Panc1 (cell line): ENCODE measurements at regions of chr16 and their contacts with region 1.

Region 1: DNA sequence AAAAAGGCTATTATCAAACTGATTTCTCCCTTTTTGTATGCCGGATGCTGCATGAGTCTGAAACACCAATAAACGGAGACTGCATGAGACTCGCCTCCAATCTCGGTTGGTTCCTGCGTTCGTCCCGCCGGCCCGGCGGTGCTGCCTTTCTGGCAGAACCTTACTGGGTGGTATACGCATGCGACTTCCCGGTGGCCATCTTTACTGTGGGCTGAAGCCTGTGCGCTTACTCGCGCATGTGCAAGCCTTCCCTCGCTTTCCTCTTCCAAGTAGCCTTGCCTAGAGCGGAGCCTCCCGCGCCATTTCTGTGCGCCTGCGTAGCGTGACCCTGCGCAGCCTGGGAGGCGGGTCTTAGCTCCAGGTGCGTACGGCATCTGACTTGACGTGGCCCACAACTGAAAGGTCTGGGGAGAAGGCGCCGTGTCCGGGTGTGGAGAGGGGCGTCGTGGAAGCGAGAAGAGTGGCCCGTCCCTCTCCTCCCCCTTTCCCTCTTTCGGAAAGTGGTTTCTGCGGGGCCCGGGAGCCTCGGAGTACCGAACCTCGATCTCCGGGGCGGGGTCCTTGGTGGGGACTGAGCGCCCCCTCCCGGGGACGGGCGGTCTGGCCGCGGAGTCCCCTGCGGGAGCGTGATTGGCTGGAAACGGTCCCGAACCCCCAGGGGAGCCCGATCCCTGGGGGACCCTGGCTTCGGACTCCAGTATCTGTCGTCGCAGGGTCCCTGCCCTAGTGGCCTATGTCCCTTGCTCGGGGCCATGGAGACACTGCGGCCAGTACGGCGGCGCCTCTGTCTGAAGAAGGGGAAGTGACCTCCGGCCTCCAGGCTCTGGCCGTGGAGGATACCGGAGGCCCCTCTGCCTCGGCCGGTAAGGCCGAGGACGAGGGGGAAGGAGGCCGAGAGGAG is at the start of gene PAGR1:
- DNase-seq: peak; percentile 98
- ATAC-seq: peak; percentile 75
- H3K4me3 ChIP-seq: peak within 1 kb of the TSS; percentile 86 to 92
- H3K27ac ChIP-seq: peak within 1 kb of the TSS; percentile 97
- H3K4me1 ChIP-seq: peaks cover 59% of the 10 kb centered on the region
- H3K27me3 ChIP-seq: no peaks in the 10 kb centered on the region
- CTCF ChIP-seq: peak; percentile 97
- total RNA-seq, gene PAGR1: 42.5 TPM

Region 2: DNA sequence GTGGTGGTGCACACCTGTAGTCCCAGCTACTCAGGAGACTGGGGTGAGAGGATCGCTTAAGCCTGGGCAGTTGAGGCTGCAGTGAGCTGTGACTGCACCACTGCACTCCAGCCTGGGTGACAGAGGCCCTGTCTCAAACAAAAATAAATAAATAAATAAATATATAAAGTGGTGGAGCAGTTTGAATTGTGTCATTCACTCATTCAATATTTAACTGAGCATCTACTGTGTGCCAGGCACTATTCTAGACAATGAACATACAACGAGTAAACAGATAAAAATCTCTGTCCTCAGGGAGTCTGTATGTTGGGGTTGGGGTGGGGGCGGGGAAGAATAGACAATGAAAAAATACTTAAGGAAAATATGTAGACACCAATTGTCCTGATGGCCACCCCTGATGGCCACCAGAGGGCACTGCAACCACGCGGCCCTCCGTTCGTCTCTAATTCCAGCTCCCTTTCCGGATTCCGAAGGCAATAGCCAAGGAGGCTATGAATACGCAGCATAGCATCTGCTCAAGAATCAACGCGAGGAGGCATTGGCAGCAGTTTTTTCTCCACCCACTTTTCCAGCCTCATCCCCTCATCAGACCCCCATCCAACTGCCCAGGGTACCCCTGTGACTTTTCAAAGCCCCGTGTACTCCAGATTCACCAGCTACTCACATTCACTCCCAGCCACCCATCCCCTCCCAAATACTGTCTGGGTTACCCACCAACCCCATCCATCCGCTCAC is 115.6 kb before region 1 on chr16:
- CTCF ChIA-PET with region 1: interaction called, 20 read pairs
- POLR2A ChIA-PET with region 1: interaction called, 17 read pairs
- in situ Hi-C with region 1: no loop called
- intact Hi-C with region 1: loop called (anchors 10 kb)
- DNase-seq: peak; percentile 75
- ATAC-seq: peak; percentile 96
- H3K4me3 ChIP-seq: no peak overlapping the region
- H3K27ac ChIP-seq: no peak overlapping the region
- H3K4me1 ChIP-seq: no peaks in the 10 kb centered on the region
- H3K27me3 ChIP-seq: no peaks in the 10 kb centered on the region
- CTCF ChIP-seq: peak; percentile 97

Region 3: GRCh38 chr16:29848420-29849297 is 32.6 kb after region 1 on chr16:
- CTCF ChIA-PET with region 1: interaction called, 10 read pairs
- POLR2A ChIA-PET with region 1: no interaction called
- in situ Hi-C with region 1: no loop called
- intact Hi-C with region 1: no loop called
- DNase-seq: peak; percentile 51
- ATAC-seq: peak; percentile 91
- H3K4me3 ChIP-seq: no peak overlapping the region
- H3K27ac ChIP-seq: no peak overlapping the region
- H3K4me1 ChIP-seq: no peaks in the 10 kb centered on the region
- H3K27me3 ChIP-seq: no peaks in the 10 kb centered on the region
- CTCF ChIP-seq: peak; percentile 92

Region 4: DNA sequence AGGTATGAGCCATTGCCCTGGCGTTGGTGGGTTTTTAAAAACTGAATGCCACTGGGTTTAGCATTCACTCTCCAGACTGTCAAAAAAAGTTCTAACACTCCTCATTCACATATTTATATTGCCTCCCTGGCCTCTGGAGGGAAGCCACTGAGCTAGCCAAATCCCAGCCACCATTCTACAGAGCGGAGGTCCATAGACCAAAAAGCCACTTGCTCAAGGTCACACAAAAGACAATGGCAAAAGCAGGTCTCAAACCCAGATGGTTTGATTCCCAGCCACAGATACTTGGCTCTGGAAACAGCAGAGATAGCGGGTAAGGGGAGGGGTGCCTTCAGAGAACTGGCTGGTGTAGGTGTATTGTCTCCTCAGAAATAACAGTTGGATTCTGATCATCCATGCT is 65.0 kb after region 1 on chr16:
- CTCF ChIA-PET with region 1: no interaction called
- POLR2A ChIA-PET with region 1: no interaction called
- in situ Hi-C with region 1: no loop called
- intact Hi-C with region 1: no loop called
- DNase-seq: no peak
- ATAC-seq: no peak
- H3K4me3 ChIP-seq: no peak overlapping the region
- H3K27ac ChIP-seq: no peak overlapping the region
- H3K4me1 ChIP-seq: no peaks in the 10 kb centered on the region
- H3K27me3 ChIP-seq: no peaks in the 10 kb centered on the region
- CTCF ChIP-seq: no peak

Region 5: GRCh38 chr16:29900102-29900887 is 84.3 kb after region 1 on chr16 and contains the start of gene ASPHD1:
- CTCF ChIA-PET with region 1: interaction called, 11 read pairs
- POLR2A ChIA-PET with region 1: no interaction called
- in situ Hi-C with region 1: no loop called
- intact Hi-C with region 1: no loop called
- DNase-seq: peak; percentile 57
- ATAC-seq: peak; percentile 84
- H3K4me3 ChIP-seq: peak within 1 kb of the TSS; percentile 48 to 71
- H3K27ac ChIP-seq: peak within 1 kb of the TSS; percentile 70
- H3K4me1 ChIP-seq: peaks cover 5% of the 10 kb centered on the region; the same call in 1 of the 2 replicates
- H3K27me3 ChIP-seq: no peaks in the 10 kb centered on the region
- CTCF ChIP-seq: no peak
- total RNA-seq, gene ASPHD1: 87.0 TPM